ENCODE measurements at regions of chr6 and their contacts with region 1.

Region 1: DNA sequence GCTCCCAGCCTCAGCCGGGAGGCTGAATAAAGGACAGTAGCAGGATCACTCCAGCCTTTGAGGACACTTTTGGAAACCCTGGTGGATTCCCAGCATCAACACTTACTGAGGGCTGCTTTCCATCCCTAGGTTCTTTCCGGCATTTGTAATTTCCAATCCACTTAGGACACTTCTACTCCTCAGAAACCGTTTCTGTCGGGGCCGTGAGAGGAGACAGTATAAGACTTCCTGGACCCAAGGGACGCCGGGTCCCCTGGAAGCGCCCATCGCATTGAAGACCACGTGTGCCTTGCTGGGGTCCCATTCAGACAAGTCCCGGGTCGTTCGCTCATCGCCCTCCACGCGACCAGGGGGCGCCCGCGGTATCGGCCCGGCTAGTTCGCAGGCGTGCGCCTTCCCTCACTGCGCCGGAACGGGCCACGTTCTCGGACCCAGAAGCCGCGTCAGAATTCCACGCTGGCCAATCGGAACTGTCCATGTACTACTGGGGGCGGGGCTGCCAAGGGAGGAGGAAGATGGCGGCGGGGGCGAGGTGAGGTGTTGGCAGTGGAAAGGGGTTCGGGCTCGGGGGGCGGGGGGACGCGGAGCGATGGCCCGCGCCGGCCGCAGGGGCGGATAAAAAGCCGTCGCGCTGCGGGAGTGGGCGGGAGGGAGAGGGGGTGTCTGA is at the start of gene NUS1:
- DNase-seq: peak; percentile 98 to 100 (median 98)

Region 2: GRCh38 chr6:117174835-117175360 is 500.2 kb before region 1 on chr6:
- intact Hi-C with region 1: no loop called
- DNase-seq: no peak

Region 3: DNA sequence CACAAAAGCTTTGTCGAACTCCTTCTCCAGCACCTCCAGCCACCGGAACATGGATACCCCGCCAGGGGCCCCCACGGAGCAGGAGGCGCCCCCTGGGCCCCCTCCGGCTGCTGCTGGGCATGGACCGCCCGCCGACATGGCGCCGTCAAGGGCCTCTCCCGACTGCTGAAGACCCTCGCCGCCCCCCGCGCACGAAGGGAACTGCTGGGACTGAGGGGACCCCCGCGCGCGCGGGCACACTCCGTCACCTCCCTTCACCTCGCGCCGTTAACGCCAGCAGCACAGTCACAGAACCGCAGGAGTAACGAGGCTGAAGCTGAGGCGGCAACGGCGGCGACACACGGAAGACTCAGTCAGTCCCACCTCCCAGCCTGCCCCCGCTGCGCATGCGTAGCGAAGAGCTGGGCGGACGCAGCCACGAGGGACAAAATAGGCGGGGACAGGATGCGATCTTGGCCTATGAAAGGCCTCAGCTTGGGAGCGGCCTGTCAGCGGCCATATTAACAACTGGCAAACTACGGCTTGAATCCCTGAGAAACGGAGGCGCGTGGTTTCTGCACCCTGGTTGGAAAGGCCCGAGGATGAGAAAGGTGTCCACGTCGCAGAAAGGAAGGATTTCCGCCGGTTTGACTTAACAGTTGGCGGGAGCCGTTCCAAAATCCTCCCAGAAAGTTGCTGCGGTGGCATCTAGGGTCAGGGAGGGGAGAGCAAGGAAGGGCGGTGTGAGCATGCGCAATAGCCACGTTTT is 72.8 kb before region 1 on chr6 and contains the start of gene GOPC:
- intact Hi-C with region 1: loop called (anchors 1 kb)
- DNase-seq: peak; percentile 94 to 99 (median 96)

Region 4: DNA sequence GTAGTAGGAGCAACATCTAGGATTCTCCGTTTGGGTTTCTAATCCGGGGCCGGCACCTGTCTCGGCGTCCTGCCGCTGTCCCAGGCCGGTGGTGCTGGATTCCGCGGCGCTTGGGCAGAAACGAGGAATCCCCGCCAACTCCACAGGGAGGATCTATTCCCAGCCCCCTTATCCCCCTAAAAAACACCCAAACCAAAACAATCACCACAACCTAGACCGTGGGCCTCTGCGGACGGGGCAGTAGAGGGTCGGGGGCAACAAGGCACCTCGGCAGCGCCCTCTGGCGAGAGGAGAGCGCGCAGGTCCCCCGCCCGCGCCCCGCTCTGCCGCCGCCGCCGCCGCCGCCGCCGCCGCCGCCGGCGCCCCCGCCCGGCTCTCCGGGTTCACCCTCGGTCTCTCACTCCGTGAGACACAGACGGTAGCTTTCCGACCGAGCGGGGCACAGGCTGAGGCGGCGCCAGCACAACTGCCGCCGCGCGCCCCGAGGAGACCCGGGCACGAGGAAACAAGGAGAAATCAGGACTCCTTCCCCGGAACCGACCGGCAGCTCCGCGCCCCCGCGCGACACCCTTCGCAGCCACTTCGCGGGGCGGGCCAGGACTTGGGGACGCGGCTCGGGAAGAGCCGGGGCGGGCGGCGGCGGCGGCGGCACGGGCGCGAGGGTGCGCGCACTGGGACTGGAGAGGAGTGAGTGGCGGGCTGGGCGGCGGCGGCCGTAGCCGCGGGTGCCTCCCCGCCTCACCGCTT is 231.9 kb after region 1 on chr6 and contains the start of gene SLC35F1:
- intact Hi-C with region 1: loop called (anchors 10 kb)
- DNase-seq: peak; percentile 47 to 92 (median 67)

Measured in posterior cingulate gyrus (tissue), 11 donors.